IMR-90 (cell line): ENCODE measurements at regions of chr6 and their contacts with region 1.

Region 1: DNA sequence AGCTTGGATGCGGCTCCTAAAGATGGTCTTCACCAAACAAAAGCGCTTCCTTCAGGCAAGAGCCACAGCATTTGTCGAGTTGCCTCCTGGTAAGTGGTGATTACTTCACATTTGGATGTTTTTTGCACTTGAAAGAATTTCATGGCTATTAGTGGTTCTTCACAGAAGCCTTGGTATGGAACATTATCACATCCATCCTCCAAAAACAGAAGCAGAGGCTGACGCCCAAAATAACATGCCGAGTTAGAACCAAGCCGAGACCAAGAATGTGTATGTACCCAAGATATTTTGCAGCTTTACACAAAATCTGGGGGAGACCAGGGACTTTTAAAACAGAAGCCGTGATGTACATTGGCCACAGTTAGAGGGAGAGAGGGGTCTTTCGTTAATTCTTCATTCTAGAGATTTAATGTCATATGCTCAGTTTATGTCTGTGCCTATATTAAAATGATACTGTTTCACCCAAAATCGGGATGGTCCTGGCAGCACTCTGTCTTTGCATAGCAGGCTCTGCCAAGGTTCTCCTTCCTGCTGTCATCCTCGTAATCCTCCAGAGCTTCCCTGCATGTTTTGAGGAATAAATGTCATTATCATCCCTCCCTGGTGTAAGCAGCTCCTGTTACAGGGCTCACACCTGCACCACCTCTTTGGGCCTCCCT is 109.3 kb downstream of the TMEM242 start:
- DNase-seq: no peak
- ATAC-seq: no peak
- H3K4me3 ChIP-seq: no peak overlapping the region
- H3K27ac ChIP-seq: no peak overlapping the region
- H3K4me1 ChIP-seq: no peaks in the 10 kb centered on the region
- H3K27me3 ChIP-seq: no peaks in the 10 kb centered on the region
- CTCF ChIP-seq: no peak
- POLR2A ChIP-seq: no peak
- RAD21 ChIP-seq: no peak

Region 2: GRCh38 chr6:157227202-157228166 is 13.4 kb after region 1 on chr6:
- CTCF ChIA-PET with region 1: no interaction called
- POLR2A ChIA-PET with region 1: interaction called, 11 read pairs
- dilution Hi-C with region 1: no loop called
- in situ Hi-C with region 1: no loop called
- intact Hi-C with region 1: no loop called
- DNase-seq: no peak
- ATAC-seq: peak; percentile 42; the same call in 1 of the 2 replicates
- H3K4me3 ChIP-seq: no peak overlapping the region
- H3K27ac ChIP-seq: no peak overlapping the region
- H3K4me1 ChIP-seq: no peaks in the 10 kb centered on the region
- H3K27me3 ChIP-seq: peaks cover 3% of the 10 kb centered on the region; the same call in 1 of the 2 replicates
- CTCF ChIP-seq: peak; percentile 36; the same call in 1 of the 2 replicates
- POLR2A ChIP-seq: no peak
- RAD21 ChIP-seq: peak; percentile 22; the same call in 1 of the 2 replicates

Region 3: GRCh38 chr6:157410045-157410444 is 196.0 kb after region 1 on chr6:
- CTCF ChIA-PET with region 1: no interaction called
- POLR2A ChIA-PET with region 1: no interaction called
- dilution Hi-C with region 1: no loop called
- in situ Hi-C with region 1: no loop called
- intact Hi-C with region 1: no loop called
- DNase-seq: peak; percentile 13
- ATAC-seq: peak; percentile 44; the same call in 1 of the 2 replicates
- H3K4me3 ChIP-seq: no peak overlapping the region
- H3K27ac ChIP-seq: no peak overlapping the region
- H3K4me1 ChIP-seq: no peaks in the 10 kb centered on the region
- H3K27me3 ChIP-seq: no peaks in the 10 kb centered on the region
- CTCF ChIP-seq: no peak
- POLR2A ChIP-seq: no peak
- RAD21 ChIP-seq: no peak